ENCODE measurements at regions of chr2 and their contacts with region 1.

Region 1: GRCh38 chr2:237154082-237154638 is 68.5 kb downstream of the COPS8 start:
- DNase-seq: peak in 4 of 5 donors; percentile 42 to 63 (median 54)
- H3K4me3 ChIP-seq: no peak overlapping the region
- H3K27ac ChIP-seq: no peak overlapping the region
- H3K4me1 ChIP-seq: peaks cover 5% of the 10 kb centered on the region
- H3K27me3 ChIP-seq: no peaks in the 10 kb centered on the region
- CTCF ChIP-seq: peak; percentile 27 to 78 (median 65)
- EP300 ChIP-seq: no peak
- POLR2A ChIP-seq: no peak

Region 2: DNA sequence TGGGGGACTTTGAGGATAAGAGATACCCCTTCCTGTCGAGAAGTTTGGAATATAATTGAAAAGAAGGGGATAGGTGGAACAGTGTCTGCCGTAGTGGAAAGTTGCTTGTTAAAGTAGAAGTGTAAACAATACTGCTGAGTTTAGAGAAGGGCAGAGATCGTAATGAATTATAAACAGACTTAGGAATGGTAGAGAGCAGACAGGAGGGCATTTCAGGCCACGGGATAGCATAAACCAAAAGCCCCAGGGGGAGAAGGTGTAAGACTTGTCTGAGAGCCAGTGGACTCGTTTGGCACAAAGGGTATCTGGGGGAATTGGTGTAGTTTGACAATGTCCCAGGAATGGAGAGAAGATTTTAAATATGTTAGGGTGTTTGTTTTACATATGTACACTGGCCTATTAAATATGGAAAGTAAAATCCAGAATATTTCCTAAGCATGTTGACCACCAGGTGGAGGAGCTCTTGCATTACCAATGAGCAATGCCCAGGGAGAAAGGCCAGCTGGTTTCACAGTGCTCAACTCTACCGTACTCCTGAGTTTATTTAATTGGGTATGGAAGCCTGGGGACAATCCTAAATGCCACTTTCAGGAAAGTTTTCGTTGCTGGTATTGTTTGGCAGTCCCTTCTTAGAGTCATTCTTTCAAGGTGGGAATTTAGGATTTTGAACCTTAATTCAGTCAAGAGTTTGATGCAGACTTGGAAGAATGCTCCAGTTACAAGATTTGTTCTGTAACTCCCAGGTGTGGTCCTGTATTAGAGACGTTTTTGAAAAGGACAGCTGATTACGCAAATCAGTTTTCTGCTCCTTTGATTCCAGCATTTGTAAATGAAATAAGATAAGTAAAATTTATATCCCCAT is 61.0 kb before region 1 on chr2:
- intact Hi-C with region 1: loop called in 1 of 4 experiments (anchors 10 kb)
- DNase-seq: peak in 4 of 5 donors; percentile 49 to 65 (median 58)
- H3K4me3 ChIP-seq: no peak overlapping the region
- H3K27ac ChIP-seq: no peak overlapping the region
- H3K4me1 ChIP-seq: peaks cover 6% of the 10 kb centered on the region
- H3K27me3 ChIP-seq: no peaks in the 10 kb centered on the region
- CTCF ChIP-seq: peak; percentile 47 to 83 (median 55)
- EP300 ChIP-seq: no peak
- POLR2A ChIP-seq: no peak

Measured in ovary (tissue), 10 donors.